Cardiac septum (tissue), 1 donor: ENCODE measurements at regions of chr7 and their contacts with region 1.

Region 1: DNA sequence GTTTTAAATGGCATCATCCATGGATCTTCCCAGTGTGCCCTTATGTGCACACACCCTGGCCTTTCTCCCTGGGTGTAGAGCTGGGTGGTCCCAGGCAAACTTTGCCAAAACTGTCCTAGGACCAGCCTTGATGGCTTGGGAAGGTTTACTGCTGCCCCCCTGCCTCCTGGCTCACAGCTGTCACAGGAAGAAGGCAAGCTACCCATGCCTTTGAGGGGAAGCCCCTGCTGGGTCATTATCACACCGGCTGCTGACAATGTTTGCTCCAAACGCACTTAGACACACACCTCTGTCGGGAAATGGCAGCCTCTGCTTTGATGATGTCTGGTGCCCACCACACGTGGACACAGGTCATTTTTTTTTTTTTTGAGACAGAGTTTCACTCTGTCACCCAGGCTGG is 25.2 kb upstream of the FIGNL1 start:
- DNase-seq: no peak

Region 2: DNA sequence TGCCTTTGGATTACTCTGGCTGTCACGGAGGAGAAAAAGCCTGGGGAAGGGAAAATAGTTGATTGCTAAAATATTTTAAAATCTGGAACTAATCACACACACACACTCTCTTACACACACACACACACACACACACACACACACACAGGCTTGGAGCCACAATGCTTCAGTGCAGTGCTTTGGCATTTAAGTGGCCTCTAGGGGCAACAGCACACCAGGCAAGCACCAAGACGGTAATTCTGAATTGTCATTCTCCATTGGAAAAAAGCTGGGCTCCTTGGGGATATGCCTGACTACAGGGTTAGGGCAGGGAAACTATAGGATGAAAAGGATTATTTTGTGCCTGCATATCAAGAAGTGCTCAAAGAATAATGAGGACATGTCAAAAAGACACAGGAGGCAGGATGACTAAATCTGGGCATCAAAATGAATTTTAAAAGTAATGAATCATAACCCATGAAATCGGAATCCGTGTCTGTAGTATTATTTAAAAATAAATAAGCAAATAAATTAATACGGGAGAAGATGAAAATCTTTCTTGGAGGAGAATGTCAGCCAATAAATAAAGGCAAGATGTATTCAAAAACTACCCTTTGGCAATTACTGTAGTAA is 120.3 kb after region 1 on chr7:
- intact Hi-C with region 1: loop called (anchors 5 kb)
- DNase-seq: no peak